ENCODE measurements at regions of chr16 and their contacts with region 1.

Region 1: GRCh38 chr16:4253394-4254150 is 11.7 kb upstream of the SRL start:
- DNase-seq: peak; percentile 93 to 100
- H3K4me3 ChIP-seq: peak overlapping the region; percentile 83
- H3K27ac ChIP-seq: peak overlapping the region; percentile 61
- H3K4me1 ChIP-seq: no peaks in the 10 kb centered on the region
- H3K27me3 ChIP-seq: no peaks in the 10 kb centered on the region
- CTCF ChIP-seq: no peak

Region 2: DNA sequence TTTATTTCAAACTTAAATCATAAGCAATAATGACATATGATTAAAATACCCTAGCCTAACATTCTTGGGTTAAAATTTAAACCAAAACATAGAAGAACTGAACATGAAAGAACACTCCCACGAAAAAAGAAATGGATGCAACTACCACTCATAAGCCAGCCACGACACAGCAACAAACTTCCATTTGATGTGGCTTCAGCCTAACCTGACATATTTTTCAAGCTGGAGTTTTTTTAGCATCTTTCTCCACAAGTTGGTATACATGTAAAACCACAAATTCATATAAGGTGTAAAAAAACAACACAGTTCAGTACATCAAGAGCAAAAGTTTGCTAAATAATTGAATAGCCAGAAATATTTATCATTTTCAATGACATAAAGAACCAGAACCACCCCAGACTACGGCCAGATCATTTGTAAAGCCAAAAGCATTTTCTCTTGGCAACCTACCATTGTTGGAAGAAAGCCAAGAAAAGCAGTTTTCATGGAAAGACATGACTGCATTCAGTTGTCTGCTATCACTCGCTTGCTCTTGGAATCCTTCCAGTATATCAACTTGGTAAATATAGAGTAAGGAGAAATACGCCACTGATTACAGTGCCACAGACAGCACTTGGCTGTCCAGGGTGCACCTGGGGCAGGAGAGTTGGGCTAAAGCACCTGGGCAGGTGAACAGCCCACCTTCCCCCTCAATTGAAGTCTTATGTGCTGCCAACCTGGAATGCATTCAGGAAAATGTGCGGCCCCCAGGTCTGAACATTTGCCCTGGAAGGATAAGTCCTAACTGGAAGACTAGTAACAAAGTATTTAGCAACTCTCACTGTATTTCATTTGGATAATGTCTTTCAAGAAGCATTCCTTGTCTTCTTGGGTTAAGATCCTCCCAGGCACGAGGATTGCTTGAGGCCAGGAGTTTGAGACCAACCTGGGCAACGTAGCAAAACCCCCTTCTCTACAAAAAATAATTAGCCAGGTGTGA is 433.5 kb before region 1 on chr16:
- CTCF ChIA-PET with region 1: no interaction called
- POLR2A ChIA-PET with region 1: no interaction called
- intact Hi-C with region 1: loop called (anchors 10 kb)
- DNase-seq: peak; percentile 43 to 46
- H3K4me3 ChIP-seq: no peak overlapping the region
- H3K27ac ChIP-seq: no peak overlapping the region
- H3K4me1 ChIP-seq: peaks cover 17% of the 10 kb centered on the region
- H3K27me3 ChIP-seq: no peaks in the 10 kb centered on the region
- CTCF ChIP-seq: no peak

Region 3: GRCh38 chr16:3999479-4000325 is 253.9 kb before region 1 on chr16:
- CTCF ChIA-PET with region 1: no interaction called
- POLR2A ChIA-PET with region 1: interaction called, 12 read pairs
- intact Hi-C with region 1: no loop called
- DNase-seq: no peak
- H3K4me3 ChIP-seq: no peak overlapping the region
- H3K27ac ChIP-seq: no peak overlapping the region
- H3K4me1 ChIP-seq: no peaks in the 10 kb centered on the region
- H3K27me3 ChIP-seq: no peaks in the 10 kb centered on the region
- CTCF ChIP-seq: no peak

Region 4: DNA sequence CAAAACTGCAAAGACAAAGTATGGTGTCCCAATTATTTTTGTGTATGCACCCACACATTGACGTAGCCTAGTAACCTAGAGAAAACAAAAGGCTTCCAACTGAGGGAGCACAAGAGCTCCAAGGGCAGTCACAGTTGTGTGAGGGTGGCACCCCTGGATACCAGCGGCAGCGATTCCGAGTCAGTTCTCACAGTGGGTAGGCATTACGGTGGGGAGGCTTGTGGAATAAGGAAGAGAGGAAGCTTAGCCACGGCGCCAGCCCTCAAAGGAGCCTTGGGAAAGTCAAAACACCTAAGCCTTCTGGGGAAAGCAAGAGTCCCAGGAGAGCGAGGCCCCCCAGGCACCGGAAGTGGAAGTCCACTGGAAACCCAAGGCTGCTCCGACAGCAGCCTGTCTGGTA is 106.3 kb before region 1 on chr16:
- CTCF ChIA-PET with region 1: no interaction called
- POLR2A ChIA-PET with region 1: interaction called, 22 read pairs
- intact Hi-C with region 1: no loop called
- DNase-seq: no peak
- H3K4me3 ChIP-seq: no peak overlapping the region
- H3K27ac ChIP-seq: no peak overlapping the region
- H3K4me1 ChIP-seq: no peaks in the 10 kb centered on the region
- H3K27me3 ChIP-seq: no peaks in the 10 kb centered on the region
- CTCF ChIP-seq: no peak

Region 5: DNA sequence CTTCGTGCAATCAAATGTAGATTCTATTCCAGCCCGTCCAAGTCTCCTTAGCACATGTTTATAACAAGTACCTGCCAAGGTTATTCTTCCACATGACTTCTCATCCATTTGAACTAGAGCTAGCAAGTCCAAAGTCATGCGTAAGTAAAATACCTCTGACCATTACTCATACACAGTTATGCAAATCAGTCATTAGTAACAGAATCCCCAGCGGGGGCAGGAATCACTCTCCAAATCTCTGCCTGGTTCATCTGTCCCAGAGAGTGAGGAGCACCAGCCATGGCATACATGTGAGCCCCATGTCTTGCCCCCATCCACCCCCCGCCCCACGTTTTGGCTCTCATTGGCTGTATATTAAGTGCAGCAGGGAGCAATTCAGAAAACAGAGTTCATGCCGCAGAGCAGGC is 39.4 kb before region 1 on chr16:
- CTCF ChIA-PET with region 1: interaction called, 10 read pairs
- POLR2A ChIA-PET with region 1: interaction called, 13 read pairs
- intact Hi-C with region 1: no loop called
- DNase-seq: peak; percentile 52 to 93
- H3K4me3 ChIP-seq: no peak overlapping the region
- H3K27ac ChIP-seq: peak overlapping the region; percentile 72
- H3K4me1 ChIP-seq: peaks cover 23% of the 10 kb centered on the region
- H3K27me3 ChIP-seq: no peaks in the 10 kb centered on the region
- CTCF ChIP-seq: no peak

Region 6: DNA sequence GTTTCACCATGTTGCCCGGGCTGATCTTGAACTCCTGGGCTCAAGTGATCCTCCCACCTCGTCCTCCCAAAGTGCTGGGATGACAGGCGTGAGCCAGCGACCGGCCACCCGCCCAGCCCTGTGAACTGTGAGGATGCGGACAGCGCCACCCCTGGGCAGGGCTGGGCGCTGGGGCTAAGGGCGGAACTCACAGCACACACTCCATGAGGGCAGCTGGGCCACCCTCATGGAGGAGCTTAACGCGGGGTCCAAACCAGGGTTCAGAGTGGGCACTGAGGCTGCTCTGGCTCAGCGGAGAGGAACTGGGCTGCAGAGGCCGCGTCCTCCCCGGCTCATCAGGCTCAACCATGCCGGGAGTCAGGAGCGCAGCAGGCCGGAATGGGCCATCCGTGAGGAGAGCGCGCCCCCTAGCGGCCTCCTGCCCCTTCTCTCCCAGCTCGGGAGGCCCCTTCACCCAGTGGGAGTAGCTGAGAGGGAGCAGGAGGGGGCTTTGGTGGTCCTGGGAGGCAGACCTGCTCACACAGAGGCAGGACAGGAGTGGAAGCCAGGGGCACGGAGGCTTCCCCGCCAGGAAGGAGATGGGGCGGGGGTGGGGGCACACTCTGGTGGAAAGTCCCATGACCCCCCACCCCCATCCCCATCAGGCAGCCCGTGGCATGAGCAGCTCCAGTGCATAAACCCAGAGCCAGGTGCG is 149.0 kb after region 1 on chr16:
- CTCF ChIA-PET with region 1: interaction called, 6 read pairs
- POLR2A ChIA-PET with region 1: no interaction called
- intact Hi-C with region 1: loop called (anchors 5 kb)
- DNase-seq: peak in 1 of 2 experiments; percentile 87
- H3K4me3 ChIP-seq: no peak overlapping the region
- H3K27ac ChIP-seq: no peak overlapping the region
- H3K4me1 ChIP-seq: peaks cover 4% of the 10 kb centered on the region; the same call in 1 of the 2 replicates
- H3K27me3 ChIP-seq: no peaks in the 10 kb centered on the region
- CTCF ChIP-seq: peak; percentile 93